Right lobe of liver (tissue), 6 donors: ENCODE measurements at regions of chr20 and their contacts with region 1.

Region 1: GRCh38 chr20:59222253-59223181 is 58.9 kb downstream of the ZNF831 start:
- DNase-seq: peak; percentile 74 to 84 (median 79)
- ATAC-seq: peak; percentile 94 to 98 (median 98)
- H3K4me3 ChIP-seq: peak overlapping the region; percentile 21 to 52 (median 29)
- H3K27ac ChIP-seq: no peak overlapping the region
- H3K4me1 ChIP-seq: peaks cover 0 to 12% (median 0%) of the 10 kb centered on the region in 4 donors
- H3K27me3 ChIP-seq: peaks cover 0 to 18% of the 10 kb centered on the region in 2 donors
- CTCF ChIP-seq: peak; percentile 81 to 96 (median 93)
- POLR2A ChIP-seq: no peak

Region 2: GRCh38 chr20:58584881-58585752 is 637.4 kb before region 1 on chr20:
- intact Hi-C with region 1: no loop called
- DNase-seq: no peak
- ATAC-seq: no peak
- H3K4me3 ChIP-seq: no peak overlapping the region
- H3K27ac ChIP-seq: no peak overlapping the region
- H3K4me1 ChIP-seq: no peaks in the 10 kb centered on the region
- H3K27me3 ChIP-seq: no peaks in the 10 kb centered on the region
- CTCF ChIP-seq: no peak
- POLR2A ChIP-seq: no peak

Region 3: DNA sequence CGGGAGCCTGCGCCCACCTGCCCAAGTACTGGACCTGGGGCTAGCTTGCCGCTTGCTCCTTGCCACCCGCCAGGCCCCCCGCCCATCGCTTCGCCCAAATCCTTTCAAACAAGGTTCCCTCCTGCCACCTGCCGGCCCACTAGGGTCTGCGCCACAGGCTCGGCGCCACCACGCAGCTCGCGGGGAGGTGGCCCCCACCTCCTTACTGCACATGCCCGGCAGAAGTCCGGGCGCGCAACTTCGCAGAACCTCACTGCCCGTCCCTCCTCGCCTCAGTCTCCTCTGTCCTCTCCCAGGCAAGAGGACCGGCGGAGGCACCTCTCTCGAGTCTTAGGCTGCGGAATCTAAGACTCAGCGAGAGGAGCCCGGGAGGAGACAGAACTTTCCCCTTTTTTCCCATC is 383.0 kb before region 1 on chr20:
- intact Hi-C with region 1: no loop called
- DNase-seq: peak in 1 of 3 donors; percentile 44
- ATAC-seq: peak; percentile 41 to 50 (median 48)
- H3K4me3 ChIP-seq: no peak overlapping the region
- H3K27ac ChIP-seq: no peak overlapping the region
- H3K4me1 ChIP-seq: peaks cover 0 to 6% (median 0%) of the 10 kb centered on the region in 4 donors
- H3K27me3 ChIP-seq: no peaks in the 10 kb centered on the region
- CTCF ChIP-seq: peak; percentile 12 to 35 (median 20)
- POLR2A ChIP-seq: no peak

Region 4: DNA sequence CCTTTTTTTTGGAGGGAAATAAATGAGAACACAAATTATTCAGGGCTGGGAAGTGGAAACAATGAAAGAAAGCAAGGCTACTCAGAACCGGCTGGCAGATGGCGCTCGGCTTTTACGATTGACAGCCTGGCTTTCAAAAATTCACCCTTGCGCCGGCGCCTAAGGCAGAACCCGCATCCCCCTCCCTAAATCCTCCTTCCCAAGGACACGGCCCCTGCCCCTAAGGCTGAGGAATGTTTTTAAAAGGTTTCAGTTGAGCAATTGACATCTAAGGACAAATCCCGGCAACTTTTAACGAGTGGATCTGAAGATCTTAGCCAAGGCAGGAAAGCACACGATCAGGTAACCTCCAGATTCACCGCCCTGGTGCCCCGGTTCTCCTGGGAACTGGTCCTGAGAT is 353.7 kb before region 1 on chr20:
- intact Hi-C with region 1: loop called in 1 of 2 experiments (anchors 5 kb)
- DNase-seq: no peak
- ATAC-seq: no peak
- H3K4me3 ChIP-seq: no peak overlapping the region
- H3K27ac ChIP-seq: no peak overlapping the region
- H3K4me1 ChIP-seq: no peaks in the 10 kb centered on the region
- H3K27me3 ChIP-seq: no peaks in the 10 kb centered on the region
- CTCF ChIP-seq: no peak
- POLR2A ChIP-seq: no peak

Region 5: DNA sequence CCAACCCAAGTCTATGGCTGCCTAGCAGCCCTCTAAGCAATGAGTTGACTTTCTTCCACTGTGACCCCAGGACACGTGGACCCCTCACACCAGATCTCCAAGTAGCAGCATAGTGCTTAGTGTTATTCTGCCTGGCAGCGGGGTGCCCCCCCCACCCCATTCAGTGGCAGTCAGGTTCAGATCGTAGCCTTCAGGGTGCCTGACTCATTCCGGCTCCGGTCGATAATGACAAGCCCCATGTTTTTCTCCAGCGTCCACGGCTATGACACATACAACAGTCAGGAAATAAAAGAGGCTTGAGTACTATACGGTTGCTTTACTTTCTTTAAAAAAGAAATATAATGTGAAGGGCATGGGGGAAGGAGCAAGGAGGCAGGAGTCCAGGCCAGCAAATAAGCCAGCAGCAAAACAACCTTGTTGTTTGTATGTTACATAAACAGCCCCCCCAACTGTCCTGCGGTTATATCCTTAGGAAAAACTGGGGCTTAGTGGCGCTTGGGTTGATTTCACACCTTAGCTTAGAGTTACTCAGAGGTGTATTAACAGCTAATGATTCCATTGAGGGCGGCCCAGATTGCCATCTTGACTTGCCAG is 346.9 kb before region 1 on chr20:
- intact Hi-C with region 1: loop called in 1 of 2 experiments (anchors 5 kb)
- DNase-seq: no peak
- ATAC-seq: no peak
- H3K4me3 ChIP-seq: no peak overlapping the region
- H3K27ac ChIP-seq: no peak overlapping the region
- H3K4me1 ChIP-seq: no peaks in the 10 kb centered on the region
- H3K27me3 ChIP-seq: no peaks in the 10 kb centered on the region
- CTCF ChIP-seq: no peak
- POLR2A ChIP-seq: no peak

Region 6: GRCh38 chr20:58986968-58987517 is 235.5 kb before region 1 on chr20:
- intact Hi-C with region 1: loop called in 1 of 2 experiments (anchors 5 kb)
- DNase-seq: peak in 1 of 3 donors; percentile 18
- ATAC-seq: no peak
- H3K4me3 ChIP-seq: no peak overlapping the region
- H3K27ac ChIP-seq: no peak overlapping the region
- H3K4me1 ChIP-seq: peaks cover 0 to 41% (median 3%) of the 10 kb centered on the region in 4 donors
- H3K27me3 ChIP-seq: no peaks in the 10 kb centered on the region
- CTCF ChIP-seq: no peak
- POLR2A ChIP-seq: no peak

Region 7: DNA sequence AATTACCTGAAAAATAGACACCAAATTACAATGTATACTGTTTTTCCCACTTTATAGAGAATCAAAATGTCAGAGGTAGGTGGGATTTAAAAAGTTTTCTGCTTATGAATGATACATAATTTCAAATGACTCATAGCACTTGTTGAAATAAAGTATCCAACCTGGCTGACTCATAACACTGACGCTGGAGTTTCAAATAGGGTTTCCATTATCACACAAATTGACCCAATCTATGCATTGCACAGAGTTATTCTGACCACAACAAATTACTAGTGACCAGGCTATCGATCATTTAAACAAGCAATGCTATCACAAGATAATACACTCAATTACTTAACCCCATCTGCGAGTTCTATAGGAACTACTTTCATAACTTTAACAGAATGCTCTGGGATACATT is 148.1 kb before region 1 on chr20:
- intact Hi-C with region 1: loop called in 1 of 2 experiments (anchors 10 kb)
- DNase-seq: no peak
- ATAC-seq: no peak
- H3K4me3 ChIP-seq: no peak overlapping the region
- H3K27ac ChIP-seq: no peak overlapping the region
- H3K4me1 ChIP-seq: no peaks in the 10 kb centered on the region
- H3K27me3 ChIP-seq: peaks cover 0 to 2% of the 10 kb centered on the region in 2 donors
- CTCF ChIP-seq: no peak
- POLR2A ChIP-seq: no peak

Region 8: DNA sequence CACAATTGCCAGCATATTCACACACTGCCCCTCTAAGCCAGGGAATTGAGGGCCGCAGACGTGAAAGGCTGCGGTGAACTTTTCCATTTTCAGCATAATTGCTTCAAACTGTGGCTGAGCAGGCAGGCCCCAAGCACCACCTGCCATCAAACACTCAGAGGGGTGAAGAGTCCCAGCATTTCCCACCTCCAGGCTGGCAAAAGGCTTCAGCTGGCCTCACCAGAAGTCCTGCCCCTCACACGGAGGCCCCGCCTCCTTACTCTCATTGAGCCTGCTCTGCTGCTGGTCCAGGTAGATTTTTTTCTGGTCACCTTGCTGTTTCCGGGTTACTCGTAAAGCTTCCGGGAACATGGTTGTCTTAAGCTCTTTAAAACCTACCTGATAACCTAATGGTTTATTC is 127.9 kb before region 1 on chr20:
- intact Hi-C with region 1: loop called in 1 of 2 experiments (anchors 10 kb)
- DNase-seq: no peak
- ATAC-seq: no peak
- H3K4me3 ChIP-seq: no peak overlapping the region
- H3K27ac ChIP-seq: no peak overlapping the region
- H3K4me1 ChIP-seq: no peaks in the 10 kb centered on the region
- H3K27me3 ChIP-seq: no peaks in the 10 kb centered on the region
- CTCF ChIP-seq: no peak
- POLR2A ChIP-seq: no peak

Region 9: DNA sequence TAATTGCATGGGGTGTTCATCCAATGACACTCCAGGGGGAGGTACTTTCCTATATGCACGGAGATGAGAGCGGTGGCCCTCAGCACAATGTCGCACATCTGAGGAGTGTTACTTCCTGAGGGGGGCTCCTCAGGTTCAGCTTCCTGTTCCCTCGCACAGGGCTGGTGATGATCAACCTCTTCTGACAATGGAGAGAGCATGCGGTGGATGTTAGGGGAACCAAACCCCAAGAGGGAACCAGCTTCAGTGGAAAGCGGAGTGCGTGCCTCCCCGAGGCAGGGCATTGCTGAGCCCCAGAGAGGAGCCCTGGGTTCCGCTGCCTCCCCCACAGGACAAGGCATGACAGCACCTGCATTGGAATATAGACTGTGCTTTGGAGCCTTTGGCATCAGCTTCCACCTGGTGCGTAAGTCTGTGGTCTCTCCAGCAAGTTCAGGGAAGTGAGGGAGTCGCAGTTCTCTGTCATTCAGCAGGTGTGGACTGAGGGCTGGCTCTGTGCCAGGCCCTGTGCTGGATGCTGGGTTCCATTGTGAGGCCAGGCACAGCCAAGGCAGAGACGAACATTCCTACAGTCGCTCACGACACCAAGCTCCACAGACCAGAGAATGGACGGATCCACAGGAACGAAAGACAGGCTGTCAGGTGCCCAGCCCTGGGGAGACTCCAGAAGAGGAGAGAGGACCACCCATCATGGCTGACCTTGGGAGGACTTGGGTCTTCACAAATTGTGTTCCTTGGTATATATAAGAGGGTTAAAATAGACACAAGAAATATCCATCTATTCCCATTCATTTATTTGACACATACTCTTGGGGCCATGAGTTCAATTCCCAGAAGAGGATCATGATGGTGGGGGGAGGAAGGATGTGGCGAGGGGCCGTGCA is 62.8 kb before region 1 on chr20:
- intact Hi-C with region 1: no loop called
- DNase-seq: no peak
- ATAC-seq: peak; percentile 25 to 62 (median 50)
- H3K4me3 ChIP-seq: no peak overlapping the region
- H3K27ac ChIP-seq: no peak overlapping the region
- H3K4me1 ChIP-seq: no peaks in the 10 kb centered on the region
- H3K27me3 ChIP-seq: peaks cover 0 to 4% of the 10 kb centered on the region in 2 donors
- CTCF ChIP-seq: no peak
- POLR2A ChIP-seq: no peak

Region 10: DNA sequence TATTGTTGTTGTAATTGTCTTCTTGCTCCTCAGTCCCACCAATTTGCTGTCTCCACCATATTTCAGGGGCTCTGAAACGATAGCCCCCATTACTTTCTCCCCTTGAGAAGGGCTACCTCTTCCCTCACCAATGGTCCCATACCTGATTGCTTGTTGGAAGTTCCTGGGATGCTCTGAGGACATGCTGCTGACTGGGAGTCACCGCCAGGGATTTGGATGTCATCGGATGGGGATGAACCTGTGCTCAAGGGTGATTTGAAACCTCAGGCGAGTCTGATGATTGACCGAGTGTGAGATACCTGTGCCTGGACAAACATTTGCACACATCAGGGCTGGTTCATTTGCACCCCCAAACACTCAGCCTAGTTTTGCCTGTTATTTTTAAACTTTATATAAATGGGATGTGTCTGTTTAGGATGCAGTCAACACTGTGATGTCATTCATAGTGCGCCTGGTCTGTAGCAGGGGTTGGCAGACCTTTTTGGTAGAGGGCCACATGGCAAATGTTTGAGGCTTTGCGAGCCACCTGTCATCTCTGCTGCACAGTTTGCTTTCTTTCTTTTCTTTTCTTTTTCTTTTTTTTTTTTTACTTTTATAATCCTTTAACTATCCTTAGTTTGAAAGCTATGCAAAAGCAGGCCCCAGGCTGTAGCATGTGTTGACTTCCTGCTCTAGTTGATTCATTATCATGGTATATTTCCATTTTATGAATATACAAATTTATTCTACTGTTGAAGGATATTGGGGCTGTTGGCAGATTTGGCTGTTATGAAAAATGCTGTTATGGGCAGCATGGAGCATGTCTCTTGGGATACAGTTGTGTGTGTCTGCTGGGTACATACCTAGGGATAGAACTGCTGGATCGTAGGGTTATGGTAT is 263.3 kb after region 1 on chr20:
- intact Hi-C with region 1: no loop called
- DNase-seq: no peak
- ATAC-seq: no peak
- H3K4me3 ChIP-seq: no peak overlapping the region
- H3K27ac ChIP-seq: no peak overlapping the region
- H3K4me1 ChIP-seq: no peaks in the 10 kb centered on the region
- H3K27me3 ChIP-seq: no peaks in the 10 kb centered on the region
- CTCF ChIP-seq: no peak
- POLR2A ChIP-seq: no peak